CD4-positive, alpha-beta memory T cell (primary cell): ENCODE measurements at regions of chr10 and their contacts with region 1.

Region 1: GRCh38 chr10:100373298-100374136 is 26.5 kb downstream of the SCD start:
- DNase-seq: peak; percentile 60 to 88 (median 72)
- H3K4me3 ChIP-seq: peak overlapping the region; percentile 76 to 85
- H3K4me3 Mint-ChIP-seq: no peak overlapping the region
- H3K27ac ChIP-seq: peak overlapping the region; percentile 49
- H3K27ac Mint-ChIP-seq: no peak overlapping the region
- H3K4me1 ChIP-seq: peaks cover 45% of the 10 kb centered on the region
- H3K4me1 Mint-ChIP-seq: peaks cover 16 to 24% (median 18%) of the 10 kb centered on the region in 4 donors
- H3K27me3 ChIP-seq: no peaks in the 10 kb centered on the region
- H3K27me3 Mint-ChIP-seq: no peaks in the 10 kb centered on the region

Region 2: GRCh38 chr10:100319707-100320106 is 53.8 kb before region 1 on chr10:
- CTCF ChIA-PET with region 1: no interaction called
- POLR2A ChIA-PET with region 1: no interaction called
- intact Hi-C with region 1: no loop called
- DNase-seq: no peak
- H3K4me3 ChIP-seq: no peak overlapping the region
- H3K4me3 Mint-ChIP-seq: no peak overlapping the region
- H3K27ac ChIP-seq: no peak overlapping the region
- H3K27ac Mint-ChIP-seq: no peak overlapping the region
- H3K4me1 ChIP-seq: no peaks in the 10 kb centered on the region
- H3K4me1 Mint-ChIP-seq: no peaks in the 10 kb centered on the region
- H3K27me3 ChIP-seq: peaks cover 7% of the 10 kb centered on the region
- H3K27me3 Mint-ChIP-seq: peaks cover 23 to 25% of the 10 kb centered on the region in 2 donors

Region 3: DNA sequence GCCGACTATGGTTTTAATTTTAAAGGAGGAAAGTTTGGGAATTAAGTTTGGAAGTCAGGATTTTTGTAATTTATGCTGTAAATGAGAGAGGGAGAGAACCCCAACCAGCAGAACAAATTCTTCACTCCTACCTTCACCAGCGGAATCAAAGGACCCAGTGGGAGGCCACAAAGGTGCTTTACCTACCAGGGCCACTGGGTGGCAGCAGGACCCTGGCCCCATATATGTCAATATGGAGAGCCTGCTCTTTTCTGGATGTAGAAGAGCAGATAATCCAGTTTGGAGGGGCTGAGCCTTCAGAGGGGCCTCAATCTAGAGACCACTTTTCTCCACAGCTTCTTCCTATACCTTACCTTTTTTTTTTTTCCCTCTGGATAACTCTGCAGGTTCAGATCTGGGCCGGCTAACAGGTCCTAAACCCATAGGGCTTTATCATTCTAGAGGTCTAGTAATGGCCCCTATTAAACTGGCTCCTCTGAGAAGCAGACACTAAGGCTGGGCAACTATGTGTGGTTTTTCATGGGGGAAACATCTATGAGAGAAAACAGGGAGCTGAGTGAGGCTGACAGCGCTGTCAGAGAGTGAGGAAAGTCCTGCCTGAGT is 35.0 kb before region 1 on chr10:
- CTCF ChIA-PET with region 1: interaction called, 7 read pairs
- POLR2A ChIA-PET with region 1: no interaction called
- intact Hi-C with region 1: loop called (anchors 5 kb)
- DNase-seq: peak; percentile 68 to 74 (median 69)
- H3K4me3 ChIP-seq: no peak overlapping the region
- H3K4me3 Mint-ChIP-seq: no peak overlapping the region
- H3K27ac ChIP-seq: no peak overlapping the region
- H3K27ac Mint-ChIP-seq: peak overlapping the region in 2 of 7 donors; percentile 3 to 35
- H3K4me1 ChIP-seq: no peaks in the 10 kb centered on the region
- H3K4me1 Mint-ChIP-seq: no peaks in the 10 kb centered on the region
- H3K27me3 ChIP-seq: no peaks in the 10 kb centered on the region
- H3K27me3 Mint-ChIP-seq: peaks cover 0 to 2% of the 10 kb centered on the region in 2 donors

Region 4: GRCh38 chr10:100346765-100347567 is 26.6 kb before region 1 on chr10 and contains the start of gene SCD:
- CTCF ChIA-PET with region 1: interaction called, 7 read pairs
- POLR2A ChIA-PET with region 1: interaction called, 8 read pairs
- intact Hi-C with region 1: loop called (anchors 1 kb)
- DNase-seq: peak; percentile 70 to 85 (median 71)
- H3K4me3 ChIP-seq: peak within 1 kb of the TSS; percentile 23 to 74
- H3K4me3 Mint-ChIP-seq: peak within 1 kb of the TSS; percentile 79 to 92 (median 89)
- H3K27ac ChIP-seq: no peak within 1 kb of the TSS
- H3K27ac Mint-ChIP-seq: peak within 1 kb of the TSS; percentile 63 to 91 (median 80)
- H3K4me1 ChIP-seq: peaks cover 14% of the 10 kb centered on the region
- H3K4me1 Mint-ChIP-seq: peaks cover 9 to 19% (median 15%) of the 10 kb centered on the region in 4 donors
- H3K27me3 ChIP-seq: no peaks in the 10 kb centered on the region
- H3K27me3 Mint-ChIP-seq: peaks cover 0 to 1% of the 10 kb centered on the region in 2 donors
- total RNA-seq, gene SCD: 0.61 to 1.00 TPM

Region 5: DNA sequence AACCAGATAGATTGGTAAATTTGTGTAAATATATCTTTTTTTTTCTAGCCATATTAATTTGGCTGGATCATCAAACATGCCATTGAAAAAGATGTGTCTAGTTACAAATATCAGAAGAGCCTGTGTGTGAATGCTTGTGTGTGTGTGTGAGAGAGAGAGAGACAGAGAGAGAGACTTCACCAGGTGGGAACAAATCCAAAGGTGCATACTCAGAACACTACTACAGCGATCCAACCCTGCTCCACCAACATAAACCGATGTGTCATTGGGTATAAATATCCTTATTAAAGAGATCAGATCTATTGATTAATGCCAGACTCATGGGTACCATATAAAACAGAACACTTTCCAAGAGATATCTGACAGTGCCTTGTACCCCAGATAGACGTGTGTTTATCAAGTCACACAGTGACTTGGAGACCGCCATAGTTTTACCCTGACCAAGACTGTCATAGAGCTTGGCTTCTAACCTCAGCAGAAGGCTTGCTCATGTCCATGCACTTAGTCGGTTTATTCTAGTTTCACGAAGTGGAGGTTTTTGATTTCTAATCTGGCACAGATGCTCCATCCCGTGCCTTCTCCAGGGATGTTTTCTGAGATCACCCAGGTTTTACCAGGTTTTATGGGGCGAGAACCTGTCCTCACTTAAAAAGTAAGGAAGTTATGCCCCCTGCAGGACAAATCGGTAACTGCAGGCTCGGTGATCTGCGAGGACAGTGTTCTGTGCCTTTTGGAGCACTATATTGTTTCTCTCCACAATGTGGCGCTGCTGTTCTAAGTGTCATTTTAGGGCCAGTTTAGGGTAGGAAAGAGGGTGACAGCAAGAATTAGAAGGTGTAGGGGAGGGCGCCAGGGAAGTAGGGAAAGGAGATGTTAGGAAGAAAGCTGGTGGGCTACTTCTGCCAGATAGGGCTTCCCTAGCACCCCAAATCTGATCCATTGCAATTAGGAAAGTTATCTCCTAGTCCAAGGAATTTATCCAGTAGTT is 60.0 kb after region 1 on chr10:
- CTCF ChIA-PET with region 1: interaction called, 8 read pairs
- POLR2A ChIA-PET with region 1: no interaction called
- intact Hi-C with region 1: loop called (anchors 1 kb)
- DNase-seq: peak; percentile 87 to 93 (median 90)
- H3K4me3 ChIP-seq: no peak overlapping the region
- H3K4me3 Mint-ChIP-seq: peak overlapping the region in 1 of 8 donors; percentile 4
- H3K27ac ChIP-seq: no peak overlapping the region
- H3K27ac Mint-ChIP-seq: peak overlapping the region in 2 of 7 donors; percentile 11 to 14
- H3K4me1 ChIP-seq: no peaks in the 10 kb centered on the region
- H3K4me1 Mint-ChIP-seq: peaks cover 0 to 3% (median 1%) of the 10 kb centered on the region in 4 donors
- H3K27me3 ChIP-seq: no peaks in the 10 kb centered on the region
- H3K27me3 Mint-ChIP-seq: peaks cover 2% of the 10 kb centered on the region in 2 donors